Endothelial cell of umbilical vein (primary cell): ENCODE measurements at regions of chr11 and their contacts with region 1.

Region 1: GRCh38 chr11:103609117-103610066 is 427.0 kb upstream of the DDI1 start:
- DNase-seq: peak; percentile 89
- H3K4me3 ChIP-seq: no peak overlapping the region
- H3K27ac ChIP-seq: peak overlapping the region; percentile 99
- H3K4me1 ChIP-seq: peaks cover 25% of the 10 kb centered on the region
- H3K27me3 ChIP-seq: no peaks in the 10 kb centered on the region
- CTCF ChIP-seq: peak; percentile 81 to 83
- POLR2A ChIP-seq: peak; percentile 43

Region 2: DNA sequence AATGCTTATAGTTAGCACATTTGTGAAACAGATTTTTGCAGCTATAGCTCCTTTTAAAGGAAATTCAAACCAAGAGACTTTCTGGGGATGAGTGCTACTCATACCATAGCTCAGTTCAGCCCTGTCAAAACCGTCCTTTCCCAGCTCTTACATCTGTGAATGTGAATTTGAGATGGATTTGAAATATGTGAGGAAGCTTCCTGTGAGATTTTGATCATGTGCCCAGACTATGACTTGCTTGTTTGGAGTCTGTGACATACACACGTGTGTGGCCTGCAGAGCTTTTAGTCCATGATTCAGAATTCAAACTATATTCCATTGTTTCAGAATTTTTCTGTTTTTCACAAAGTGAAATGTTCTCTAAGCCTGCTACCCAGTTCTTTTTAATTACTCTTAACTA is 807.1 kb before region 1 on chr11:
- CTCF ChIA-PET with region 1: no interaction called
- POLR2A ChIA-PET with region 1: no interaction called
- dilution Hi-C with region 1: no loop called
- intact Hi-C with region 1: loop called (anchors 5 kb)
- DNase-seq: peak; percentile 30
- H3K4me3 ChIP-seq: no peak overlapping the region
- H3K27ac ChIP-seq: peak overlapping the region; percentile 39
- H3K4me1 ChIP-seq: peaks cover 29% of the 10 kb centered on the region
- H3K27me3 ChIP-seq: peaks cover 3 to 10% of the 10 kb centered on the region in 2 experiments
- CTCF ChIP-seq: no peak
- POLR2A ChIP-seq: no peak

Region 3: DNA sequence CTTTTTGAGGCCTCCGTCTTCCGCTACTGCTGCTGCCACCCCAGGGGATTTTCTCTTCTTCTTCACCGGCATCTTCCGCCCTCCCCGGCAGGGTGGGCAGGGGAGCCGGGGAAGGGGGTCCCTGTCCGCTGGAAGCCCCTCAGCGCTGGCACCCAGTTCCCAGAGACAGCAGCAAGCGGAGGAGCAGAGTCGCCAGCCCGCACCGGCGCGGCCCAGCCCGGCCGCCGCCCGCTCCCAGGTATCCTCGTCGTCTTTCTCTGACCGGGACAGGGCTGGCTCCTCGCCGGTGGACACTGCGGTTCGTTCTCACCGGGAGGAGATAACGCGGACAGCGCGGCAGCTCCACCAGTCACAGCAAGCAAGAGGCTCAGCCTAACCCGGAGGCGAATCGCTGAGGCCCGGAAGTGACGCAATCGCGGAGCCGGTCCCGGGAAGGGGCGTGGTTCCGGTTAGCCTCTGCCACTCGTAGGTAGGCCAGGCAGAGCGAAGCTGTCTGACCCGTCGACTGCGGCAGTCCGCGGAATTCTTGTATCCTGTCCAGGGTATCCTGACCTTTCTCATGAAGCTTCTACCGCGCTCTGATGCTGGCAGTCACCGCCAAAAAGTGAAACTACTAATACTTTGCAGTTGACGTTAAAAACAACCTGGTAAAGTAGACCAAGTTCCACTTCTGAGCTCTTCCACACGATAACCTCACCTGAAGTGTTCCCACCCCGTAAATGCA is 517.4 kb before region 1 on chr11 and contains the start of gene DCUN1D5:
- CTCF ChIA-PET with region 1: no interaction called
- POLR2A ChIA-PET with region 1: no interaction called
- dilution Hi-C with region 1: no loop called
- intact Hi-C with region 1: loop called (anchors 1 kb)
- DNase-seq: peak; percentile 96
- H3K4me3 ChIP-seq: peak within 1 kb of the TSS; percentile 64 to 94 (median 73)
- H3K27ac ChIP-seq: peak within 1 kb of the TSS; percentile 70
- H3K4me1 ChIP-seq: peaks cover 22% of the 10 kb centered on the region
- H3K27me3 ChIP-seq: peaks cover 0 to 4% of the 10 kb centered on the region in 2 experiments
- CTCF ChIP-seq: no peak
- POLR2A ChIP-seq: peak; percentile 97
- total RNA-seq, gene DCUN1D5: 49.8 and 52.9 TPM in 2 replicates

Region 4: DNA sequence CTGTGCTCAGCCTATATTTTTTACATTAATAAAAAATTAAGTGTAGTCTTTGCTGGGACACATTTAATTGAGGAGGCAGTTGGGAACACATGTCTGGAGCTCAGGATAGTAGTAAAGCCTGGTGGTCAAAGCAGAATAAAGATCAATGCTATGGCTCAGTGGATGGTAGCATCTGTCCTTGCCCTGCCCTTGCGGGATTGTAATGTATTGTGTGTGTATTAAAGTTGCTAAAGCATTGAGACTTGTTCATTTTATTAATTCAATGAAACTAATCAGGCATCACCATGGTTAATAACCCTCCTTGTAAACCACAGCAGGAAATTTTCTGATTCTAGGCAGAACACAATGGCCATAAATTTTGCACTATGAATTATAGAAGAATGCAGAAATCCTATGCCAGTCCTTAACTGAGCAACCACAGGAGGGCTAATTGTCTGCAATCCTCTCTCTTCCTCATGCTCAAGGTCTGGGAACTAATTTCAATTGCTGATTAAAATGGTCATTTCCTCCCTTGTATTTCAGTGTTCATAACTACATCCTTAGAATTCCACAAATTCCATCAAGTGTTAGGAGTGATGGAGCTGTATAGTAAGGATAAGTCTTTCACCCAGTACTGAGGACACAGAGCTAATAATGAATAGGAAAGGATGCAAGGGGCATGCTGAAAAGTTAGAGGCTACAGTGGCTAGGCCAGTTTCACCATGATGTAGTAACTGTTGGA is 23.8 kb after region 1 on chr11:
- CTCF ChIA-PET with region 1: interaction called, 5 read pairs
- POLR2A ChIA-PET with region 1: interaction called, 5 read pairs
- dilution Hi-C with region 1: no loop called
- intact Hi-C with region 1: loop called (anchors 1 kb)
- DNase-seq: peak; percentile 81
- H3K4me3 ChIP-seq: no peak overlapping the region
- H3K27ac ChIP-seq: peak overlapping the region; percentile 97
- H3K4me1 ChIP-seq: peaks cover 42% of the 10 kb centered on the region
- H3K27me3 ChIP-seq: no peaks in the 10 kb centered on the region
- CTCF ChIP-seq: peak in 1 of 2 donors; percentile 27
- POLR2A ChIP-seq: no peak

Region 5: DNA sequence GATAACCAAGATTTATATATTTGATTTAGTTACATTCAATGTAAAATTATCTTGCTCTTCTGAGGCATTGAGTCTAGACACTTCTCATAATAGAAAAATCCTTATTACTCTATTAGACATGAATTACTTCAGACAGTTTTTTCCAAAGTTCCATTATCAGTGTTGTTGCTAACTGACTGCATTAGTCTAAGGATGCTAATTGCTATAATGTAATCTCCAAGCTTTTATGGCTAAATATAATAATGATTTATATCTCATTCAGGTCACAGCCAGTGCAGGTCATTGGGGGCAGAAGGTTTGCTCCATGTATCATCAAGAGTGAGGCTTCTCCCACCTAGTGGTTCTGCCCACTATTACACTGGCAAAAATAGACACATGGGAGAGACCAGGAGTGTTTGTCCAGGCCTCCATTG is 49.8 kb after region 1 on chr11:
- CTCF ChIA-PET with region 1: no interaction called
- POLR2A ChIA-PET with region 1: no interaction called
- dilution Hi-C with region 1: no loop called
- intact Hi-C with region 1: loop called (anchors 1 kb)
- DNase-seq: peak; percentile 37
- H3K4me3 ChIP-seq: no peak overlapping the region
- H3K27ac ChIP-seq: no peak overlapping the region
- H3K4me1 ChIP-seq: peaks cover 5% of the 10 kb centered on the region
- H3K27me3 ChIP-seq: no peaks in the 10 kb centered on the region
- CTCF ChIP-seq: peak; percentile 30 to 40
- POLR2A ChIP-seq: no peak

Region 6: GRCh38 chr11:103671143-103671651 is 61.8 kb after region 1 on chr11:
- CTCF ChIA-PET with region 1: interaction called, 3 read pairs
- POLR2A ChIA-PET with region 1: no interaction called
- dilution Hi-C with region 1: no loop called
- intact Hi-C with region 1: loop called (anchors 2 kb)
- DNase-seq: no peak
- H3K4me3 ChIP-seq: no peak overlapping the region
- H3K27ac ChIP-seq: no peak overlapping the region
- H3K4me1 ChIP-seq: peaks cover 3% of the 10 kb centered on the region
- H3K27me3 ChIP-seq: no peaks in the 10 kb centered on the region
- CTCF ChIP-seq: no peak
- POLR2A ChIP-seq: no peak